Natural killer cell (primary cell): ENCODE measurements at regions of chr3 and their contacts with region 1.

Region 1: DNA sequence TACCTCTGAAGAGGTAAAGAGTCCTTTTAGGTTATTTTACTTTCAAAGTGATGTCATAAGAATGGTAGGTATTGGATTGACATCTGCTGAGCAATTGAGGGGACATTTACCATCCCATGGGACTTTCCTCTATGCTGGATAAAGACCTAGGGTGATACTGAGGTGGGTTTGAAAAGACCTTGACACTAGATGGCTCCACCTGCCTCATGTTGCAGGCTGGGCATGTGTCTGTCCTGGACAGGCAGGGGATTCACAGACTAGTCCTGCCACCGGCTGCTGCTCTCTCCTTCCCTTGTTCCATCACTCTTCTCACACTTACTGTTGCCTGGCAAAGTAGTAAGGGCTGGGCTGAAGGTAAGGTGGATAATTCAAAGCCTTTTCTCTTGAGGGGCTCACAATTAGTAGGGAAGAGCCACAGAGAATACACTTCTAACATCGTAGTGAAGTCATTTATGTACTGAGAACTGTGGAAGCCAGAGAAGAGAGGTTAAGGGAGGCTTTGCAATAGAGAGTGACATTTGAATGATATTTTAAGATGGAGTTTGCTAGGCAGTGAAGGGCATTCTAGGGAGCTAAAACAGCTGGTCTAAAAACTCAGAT is 27.7 kb downstream of the TRAK1 start:
- DNase-seq: peak in 1 of 2 donors; percentile 43
- ATAC-seq: peak in 1 of 3 donors; percentile 56
- H3K4me3 ChIP-seq: no peak overlapping the region
- H3K4me3 Mint-ChIP-seq: no peak overlapping the region
- H3K27ac ChIP-seq: no peak overlapping the region
- H3K27ac Mint-ChIP-seq: no peak overlapping the region
- H3K4me1 ChIP-seq: peaks cover 11% of the 10 kb centered on the region
- H3K4me1 Mint-ChIP-seq: peaks cover 40 to 54% of the 10 kb centered on the region in 2 donors
- H3K27me3 ChIP-seq: no peaks in the 10 kb centered on the region
- H3K27me3 Mint-ChIP-seq: no peaks in the 10 kb centered on the region
- CTCF ChIP-seq: no peak

Region 2: DNA sequence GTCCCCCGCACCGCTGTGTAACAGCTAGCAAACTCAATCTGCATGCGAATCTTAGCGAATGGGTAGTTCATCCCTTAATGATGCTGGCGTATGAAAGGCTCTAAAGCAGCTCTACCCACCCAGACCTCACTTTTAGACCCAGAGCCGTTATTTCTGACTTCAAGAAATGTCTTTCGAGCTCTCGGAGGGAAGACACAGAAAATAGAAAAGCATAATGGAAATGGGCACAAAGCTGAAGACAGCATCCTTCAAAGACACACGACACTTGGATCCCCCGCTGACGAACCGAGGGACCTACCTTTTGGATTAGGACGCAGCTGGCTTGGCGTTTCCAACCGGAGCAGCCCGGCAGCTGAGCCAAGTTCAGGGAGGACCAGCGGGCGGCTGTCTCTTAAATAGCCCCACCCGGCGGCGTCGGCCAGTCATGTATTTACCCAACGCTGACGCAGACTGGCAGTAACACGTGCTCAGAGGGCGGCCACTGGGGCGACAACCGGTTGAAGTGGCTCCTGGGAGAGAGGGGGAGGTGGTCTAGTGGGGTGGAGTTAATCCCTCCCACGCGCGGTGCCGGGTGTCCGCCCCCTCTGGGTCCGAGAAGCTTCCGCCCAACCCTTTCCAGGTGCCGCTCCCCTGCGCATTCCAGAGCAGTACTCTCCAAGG is 145.7 kb after region 1 on chr3:
- intact Hi-C with region 1: no loop called
- DNase-seq: peak in 1 of 2 donors; percentile 9
- ATAC-seq: no peak
- H3K4me3 ChIP-seq: no peak overlapping the region
- H3K4me3 Mint-ChIP-seq: no peak overlapping the region
- H3K27ac ChIP-seq: no peak overlapping the region
- H3K27ac Mint-ChIP-seq: no peak overlapping the region
- H3K4me1 ChIP-seq: no peaks in the 10 kb centered on the region
- H3K4me1 Mint-ChIP-seq: no peaks in the 10 kb centered on the region
- H3K27me3 ChIP-seq: peaks cover 27% of the 10 kb centered on the region
- H3K27me3 Mint-ChIP-seq: peaks cover 51 to 81% of the 10 kb centered on the region in 2 donors
- CTCF ChIP-seq: no peak

Region 3: DNA sequence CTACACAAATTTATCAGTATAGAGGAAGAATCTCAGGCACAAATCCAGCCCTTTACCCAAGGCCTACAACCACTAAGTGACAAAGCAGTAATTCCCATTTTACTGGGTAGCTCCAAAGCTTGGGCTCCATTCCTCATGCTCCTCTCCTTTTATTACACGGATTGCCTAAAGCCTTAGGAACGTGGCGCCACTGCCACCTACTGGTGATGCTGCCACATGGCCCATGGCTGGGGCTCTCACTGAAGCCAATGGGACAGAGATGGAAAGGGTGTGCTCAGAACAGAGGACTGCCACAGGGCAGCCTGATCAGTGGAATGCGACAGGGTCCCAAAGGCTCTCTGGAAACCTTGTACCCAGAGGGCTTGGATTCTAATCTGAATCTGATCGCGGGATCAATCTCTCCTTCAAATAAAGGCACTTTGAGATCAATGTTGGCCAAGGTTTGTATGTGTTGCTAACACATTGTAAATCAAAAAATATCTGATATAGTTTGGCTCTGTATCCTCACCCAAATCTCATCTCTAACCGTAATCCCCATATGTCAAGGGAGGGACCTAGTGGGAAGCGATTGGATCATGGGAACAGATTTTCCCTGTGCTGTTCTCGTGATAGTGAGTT is 325.1 kb after region 1 on chr3:
- intact Hi-C with region 1: loop called (anchors 5 kb)
- DNase-seq: peak; percentile 54 to 82
- ATAC-seq: peak; percentile 65 to 90 (median 79)
- H3K4me3 ChIP-seq: no peak overlapping the region
- H3K4me3 Mint-ChIP-seq: no peak overlapping the region
- H3K27ac ChIP-seq: no peak overlapping the region
- H3K27ac Mint-ChIP-seq: no peak overlapping the region
- H3K4me1 ChIP-seq: no peaks in the 10 kb centered on the region
- H3K4me1 Mint-ChIP-seq: no peaks in the 10 kb centered on the region
- H3K27me3 ChIP-seq: no peaks in the 10 kb centered on the region
- H3K27me3 Mint-ChIP-seq: peaks cover 16 to 31% of the 10 kb centered on the region in 2 donors
- CTCF ChIP-seq: peak; percentile 84